Gastrocnemius medialis (tissue), 4 donors: ENCODE measurements at regions of chr9 and their contacts with region 1.

Region 1: DNA sequence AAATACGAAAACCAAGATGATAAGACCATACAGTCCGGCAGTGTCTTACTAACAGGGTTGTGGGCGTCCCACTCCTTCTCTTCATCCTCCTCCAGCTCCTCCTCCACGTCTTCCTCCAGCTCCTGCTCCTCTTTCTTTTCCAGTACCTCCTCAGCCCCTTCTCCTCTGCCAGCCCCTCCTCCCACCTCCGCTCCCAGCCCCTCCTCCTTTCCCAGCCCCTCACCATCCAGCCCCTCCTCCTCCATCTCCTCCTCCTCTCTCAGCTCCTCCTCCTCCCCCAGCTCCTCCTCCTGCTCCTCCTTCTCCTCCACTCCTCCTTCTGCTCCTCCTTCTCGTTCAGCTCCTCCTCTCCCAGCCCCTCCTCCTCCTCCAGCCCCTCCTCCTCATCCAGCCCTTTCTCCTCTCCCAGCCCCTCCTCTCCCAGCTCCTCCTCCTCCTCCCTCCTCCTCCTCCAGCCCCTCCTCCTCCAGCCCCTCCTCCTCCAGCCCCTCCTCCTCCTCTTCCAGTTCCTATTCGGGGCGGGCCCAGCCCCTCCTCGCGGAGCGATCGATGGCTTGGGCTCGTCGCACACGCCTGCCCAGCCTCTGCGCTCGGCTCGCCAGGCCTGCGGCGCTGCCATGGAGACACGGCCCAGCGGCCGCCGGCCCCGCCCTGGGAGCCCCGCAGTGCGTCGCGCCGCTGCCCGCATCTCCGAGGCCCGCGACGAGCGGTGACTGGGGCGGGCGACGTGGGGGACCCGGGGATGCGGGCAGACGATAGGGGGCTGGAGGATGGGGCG is at the start of gene BRD3OS:
- DNase-seq: peak; percentile 95 to 96
- ATAC-seq: peak; percentile 99
- H3K4me3 ChIP-seq: peak within 1 kb of the TSS; percentile 63 to 93 (median 80)
- H3K27ac ChIP-seq: peak within 1 kb of the TSS; percentile 42 to 75 (median 68)
- H3K4me1 ChIP-seq: peaks cover 6 to 12% of the 10 kb centered on the region in 2 donors
- H3K27me3 ChIP-seq: no peaks in the 10 kb centered on the region
- CTCF ChIP-seq: no peak
- POLR2A ChIP-seq: no peak
- total RNA-seq, gene BRD3OS: 0.76 to 9.3 (median 5.8) TPM

Region 2: GRCh38 chr9:133581513-133582343 is 443.3 kb before region 1 on chr9:
- in situ Hi-C with region 1: no loop called
- intact Hi-C with region 1: no loop called
- DNase-seq: no peak
- ATAC-seq: no peak
- H3K4me3 ChIP-seq: no peak overlapping the region
- H3K27ac ChIP-seq: no peak overlapping the region
- H3K4me1 ChIP-seq: no peaks in the 10 kb centered on the region
- H3K27me3 ChIP-seq: peaks cover 23 to 35% (median 24%) of the 10 kb centered on the region in 3 donors
- CTCF ChIP-seq: no peak
- POLR2A ChIP-seq: no peak

Region 3: GRCh38 chr9:133992780-133993634 is 32.0 kb before region 1 on chr9:
- in situ Hi-C with region 1: no loop called
- intact Hi-C with region 1: loop called (anchors 1 kb)
- DNase-seq: peak; percentile 47 to 63
- ATAC-seq: peak; percentile 53 to 57
- H3K4me3 ChIP-seq: peak overlapping the region; percentile 64 to 80 (median 72)
- H3K27ac ChIP-seq: peak overlapping the region; percentile 74 to 83 (median 77)
- H3K4me1 ChIP-seq: peaks cover 9 to 20% of the 10 kb centered on the region in 2 donors
- H3K27me3 ChIP-seq: peaks cover 11 to 33% (median 33%) of the 10 kb centered on the region in 3 donors
- CTCF ChIP-seq: peak in 1 of 5 experiments; percentile 21
- POLR2A ChIP-seq: peak; percentile 14 to 15

Region 4: DNA sequence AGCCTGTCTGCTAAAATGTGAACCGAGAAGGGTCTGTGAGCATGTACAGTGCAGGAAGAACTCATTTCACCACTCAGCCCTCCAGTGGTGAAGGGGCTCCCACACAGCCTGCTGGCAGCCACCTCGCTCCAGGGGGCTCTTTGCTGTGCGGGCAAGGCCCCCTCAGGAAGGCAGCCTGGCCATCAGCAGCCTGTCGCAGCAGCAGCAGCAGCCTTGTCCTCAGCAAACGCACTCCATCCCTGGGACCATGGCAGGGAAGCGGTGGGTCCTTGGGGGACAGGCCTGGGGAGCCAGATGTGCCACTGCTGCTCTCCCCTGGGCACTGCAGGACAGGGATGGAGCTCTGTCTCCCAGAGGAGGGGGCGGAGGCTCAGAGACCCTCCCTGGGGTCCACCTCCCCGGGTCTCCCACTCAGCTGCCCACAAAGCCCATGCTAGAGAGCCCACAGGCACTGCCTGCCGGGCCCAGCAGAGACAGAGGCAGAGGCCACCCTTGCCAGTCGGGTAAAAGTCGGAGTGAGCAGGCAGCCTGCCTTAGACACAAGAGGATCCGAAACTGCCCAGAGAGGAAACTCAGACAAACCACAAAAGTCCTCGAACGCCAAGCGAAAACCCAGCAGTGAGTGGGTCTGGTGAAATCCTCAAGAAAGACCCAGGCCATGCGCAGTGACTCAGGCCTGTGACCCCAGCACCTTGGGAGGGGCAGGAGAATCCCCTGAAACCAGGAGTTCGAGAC is 34.8 kb after region 1 on chr9:
- in situ Hi-C with region 1: no loop called
- intact Hi-C with region 1: loop called (anchors 2 kb)
- DNase-seq: peak in 1 of 2 donors; percentile 28
- ATAC-seq: no peak
- H3K4me3 ChIP-seq: no peak overlapping the region
- H3K27ac ChIP-seq: no peak overlapping the region
- H3K4me1 ChIP-seq: peaks cover 93 to 100% of the 10 kb centered on the region in 2 donors
- H3K27me3 ChIP-seq: no peaks in the 10 kb centered on the region
- CTCF ChIP-seq: no peak
- POLR2A ChIP-seq: no peak